Panc1 (cell line): ENCODE measurements at regions of chr19 and their contacts with region 1.

Region 1: DNA sequence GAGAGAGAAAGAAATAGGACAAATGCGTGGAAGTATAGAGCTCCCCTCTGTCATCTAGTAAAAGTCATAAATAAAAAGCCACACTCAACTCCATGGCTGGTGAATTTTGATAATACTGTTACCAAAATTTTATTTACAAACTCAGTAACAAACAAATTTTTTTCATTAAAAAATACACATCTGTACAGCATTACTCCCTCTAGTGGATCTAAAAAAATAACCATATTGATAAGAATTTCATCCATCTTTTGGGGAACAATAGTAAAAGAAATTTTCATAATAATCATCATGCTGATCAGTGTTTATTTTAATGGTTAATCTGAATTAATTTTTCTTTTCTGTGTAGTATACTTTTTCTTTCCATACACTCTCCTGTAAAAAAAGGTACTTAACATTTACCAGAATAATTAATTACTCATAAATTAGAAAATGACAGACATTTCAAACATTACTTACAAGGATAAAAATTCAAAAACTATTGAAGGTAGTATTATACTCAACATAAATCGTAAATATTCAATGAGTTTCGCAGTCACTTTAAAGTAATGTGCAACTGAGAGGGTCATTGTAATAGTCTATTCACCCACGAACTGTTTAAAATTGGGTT is 173.5 kb upstream of the LSM14A start:
- DNase-seq: no peak
- ATAC-seq: peak; percentile 34; the same call in 1 of the 2 replicates
- H3K4me3 ChIP-seq: no peak overlapping the region
- H3K27ac ChIP-seq: no peak overlapping the region
- H3K4me1 ChIP-seq: peaks cover 6% of the 10 kb centered on the region
- H3K27me3 ChIP-seq: peaks cover 14% of the 10 kb centered on the region
- CTCF ChIP-seq: peak; percentile 52; the same call in 1 of the 2 replicates

Region 2: GRCh38 chr19:33024398-33024797 is 974.4 kb before region 1 on chr19:
- CTCF ChIA-PET with region 1: no interaction called
- POLR2A ChIA-PET with region 1: no interaction called
- in situ Hi-C with region 1: no loop called
- intact Hi-C with region 1: no loop called
- DNase-seq: no peak
- ATAC-seq: peak; percentile 28; the same call in 1 of the 2 replicates
- H3K4me3 ChIP-seq: no peak overlapping the region
- H3K27ac ChIP-seq: no peak overlapping the region
- H3K4me1 ChIP-seq: no peaks in the 10 kb centered on the region
- H3K27me3 ChIP-seq: no peaks in the 10 kb centered on the region
- CTCF ChIP-seq: no peak

Region 3: DNA sequence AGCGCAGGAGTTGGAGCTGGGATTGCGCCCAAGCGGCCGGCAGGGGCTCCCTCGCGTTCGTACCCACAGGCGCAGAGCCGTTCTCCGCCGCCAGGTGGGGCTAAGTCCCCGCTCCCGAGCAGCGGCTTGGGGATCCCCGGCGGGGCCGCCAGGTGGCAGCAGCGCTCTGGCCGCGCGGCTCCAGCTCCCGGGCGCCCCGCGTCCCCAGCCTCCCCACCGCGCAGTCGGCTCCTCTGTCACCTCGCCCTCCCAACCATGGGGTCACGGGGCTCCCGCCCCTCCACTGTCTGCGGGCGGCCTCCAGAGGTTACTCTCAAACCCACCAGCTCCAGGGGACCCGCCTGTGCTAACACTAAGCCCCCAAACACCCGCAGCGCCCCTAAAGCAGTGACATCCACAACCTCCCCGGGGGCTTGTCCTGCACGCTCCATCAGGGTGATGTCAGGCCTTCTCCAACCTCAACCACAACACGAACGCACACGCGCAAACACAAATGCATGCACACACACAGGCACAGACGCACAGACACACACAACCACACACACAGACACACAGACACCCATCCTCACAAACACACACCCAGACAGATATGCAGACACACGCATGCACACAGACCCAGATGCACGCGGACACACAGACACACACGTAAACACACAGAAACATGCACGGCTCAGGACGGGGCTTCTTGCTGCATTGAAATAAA is 220.6 kb before region 1 on chr19:
- CTCF ChIA-PET with region 1: interaction called, 23 read pairs
- POLR2A ChIA-PET with region 1: no interaction called
- in situ Hi-C with region 1: no loop called
- intact Hi-C with region 1: loop called (anchors 5 kb)
- DNase-seq: peak; percentile 67
- ATAC-seq: peak; percentile 91
- H3K4me3 ChIP-seq: peak overlapping the region; percentile 21 to 41; a peak in 3 of 4 replicates
- H3K27ac ChIP-seq: no peak overlapping the region
- H3K4me1 ChIP-seq: peaks cover 4% of the 10 kb centered on the region
- H3K27me3 ChIP-seq: peaks cover 7% of the 10 kb centered on the region; the same call in 1 of the 2 replicates
- CTCF ChIP-seq: peak; percentile 100

Region 4: DNA sequence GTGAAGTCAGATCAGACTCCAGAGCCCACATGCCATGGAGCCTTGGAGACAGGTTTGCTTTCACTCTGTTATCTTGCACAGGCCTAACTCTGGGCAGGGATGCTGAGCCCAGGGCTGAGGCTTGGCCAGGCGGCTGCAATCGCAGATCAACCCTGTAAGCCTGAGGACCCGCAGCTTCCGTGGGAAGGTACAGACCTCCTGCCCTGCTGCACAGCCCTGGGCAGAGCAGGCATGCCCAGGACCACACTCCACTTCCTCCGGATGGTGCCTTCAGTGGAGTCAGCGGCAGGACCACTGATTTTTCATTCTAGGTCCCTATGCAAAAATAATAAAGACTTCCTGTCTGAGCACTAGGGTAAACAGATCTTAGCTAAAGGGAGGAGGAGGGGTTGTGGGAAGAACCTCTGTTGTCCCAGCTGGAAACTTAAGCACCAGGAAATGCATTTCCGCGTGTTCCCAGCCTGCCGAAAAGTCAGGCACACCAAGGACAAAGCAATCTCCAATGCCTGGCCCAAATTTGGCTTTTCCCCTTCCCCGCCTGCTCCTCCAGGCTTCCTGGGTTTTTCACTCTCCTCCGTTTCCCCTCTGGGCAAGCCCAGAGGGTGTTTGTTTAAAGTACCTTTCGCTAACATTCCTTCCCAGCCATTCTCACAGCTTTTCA is 114.9 kb before region 1 on chr19:
- CTCF ChIA-PET with region 1: no interaction called
- POLR2A ChIA-PET with region 1: no interaction called
- in situ Hi-C with region 1: no loop called
- intact Hi-C with region 1: no loop called
- DNase-seq: no peak
- ATAC-seq: peak; percentile 69
- H3K4me3 ChIP-seq: peak overlapping the region in 1 of 2 experiments; percentile 18; a peak in 2 of 4 replicates
- H3K27ac ChIP-seq: no peak overlapping the region
- H3K4me1 ChIP-seq: no peaks in the 10 kb centered on the region
- H3K27me3 ChIP-seq: no peaks in the 10 kb centered on the region
- CTCF ChIP-seq: no peak

Region 5: GRCh38 chr19:34017024-34017423 is 18.2 kb after region 1 on chr19:
- CTCF ChIA-PET with region 1: no interaction called
- POLR2A ChIA-PET with region 1: no interaction called
- in situ Hi-C with region 1: no loop called
- intact Hi-C with region 1: no loop called
- DNase-seq: no peak
- ATAC-seq: no peak
- H3K4me3 ChIP-seq: no peak overlapping the region
- H3K27ac ChIP-seq: no peak overlapping the region
- H3K4me1 ChIP-seq: no peaks in the 10 kb centered on the region
- H3K27me3 ChIP-seq: peaks cover 20% of the 10 kb centered on the region
- CTCF ChIP-seq: peak; percentile 35; the same call in 1 of the 2 replicates